Activated B cell treated with CpG ODN at 0.5 μM for 24 hours (primary cell): ENCODE measurements at regions of chr10 and their contacts with region 1.

Region 1: DNA sequence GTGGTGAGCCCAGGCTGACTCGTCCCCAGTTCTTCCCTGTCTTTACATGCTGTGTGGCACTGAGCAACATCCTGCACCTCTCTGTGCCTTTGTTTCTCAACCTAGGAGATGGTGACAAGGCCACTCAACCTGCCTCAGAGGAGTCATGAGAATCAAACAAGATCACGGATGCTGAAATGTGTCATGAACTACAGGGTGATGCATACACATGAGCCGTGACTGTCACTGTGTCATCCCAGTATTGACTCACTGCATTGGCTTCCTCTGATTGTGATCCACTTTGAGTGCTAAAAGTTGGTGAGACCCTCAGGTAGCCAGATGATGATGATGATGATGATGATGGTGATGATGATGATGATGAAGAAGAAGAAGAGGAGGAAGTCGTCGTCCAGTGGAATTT is 11.5 kb downstream of the C10orf71 start:
- DNase-seq: no peak
- ATAC-seq: peak; percentile 41
- H3K4me3 Mint-ChIP-seq: peak overlapping the region; percentile 74
- H3K27ac Mint-ChIP-seq: peak overlapping the region; percentile 50
- H3K4me1 Mint-ChIP-seq: peaks cover 25% of the 10 kb centered on the region
- H3K27me3 Mint-ChIP-seq: no peaks in the 10 kb centered on the region
- CTCF ChIP-seq: no peak

Region 2: GRCh38 chr10:48792687-48793096 is 517.8 kb before region 1 on chr10:
- CTCF ChIA-PET with region 1: no interaction called
- POLR2A ChIA-PET with region 1: no interaction called
- intact Hi-C with region 1: no loop called
- DNase-seq: no peak
- ATAC-seq: no peak
- H3K4me3 Mint-ChIP-seq: no peak overlapping the region
- H3K27ac Mint-ChIP-seq: no peak overlapping the region
- H3K4me1 Mint-ChIP-seq: peaks cover under 1% of the 10 kb centered on the region
- H3K27me3 Mint-ChIP-seq: no peaks in the 10 kb centered on the region
- CTCF ChIP-seq: no peak

Region 3: DNA sequence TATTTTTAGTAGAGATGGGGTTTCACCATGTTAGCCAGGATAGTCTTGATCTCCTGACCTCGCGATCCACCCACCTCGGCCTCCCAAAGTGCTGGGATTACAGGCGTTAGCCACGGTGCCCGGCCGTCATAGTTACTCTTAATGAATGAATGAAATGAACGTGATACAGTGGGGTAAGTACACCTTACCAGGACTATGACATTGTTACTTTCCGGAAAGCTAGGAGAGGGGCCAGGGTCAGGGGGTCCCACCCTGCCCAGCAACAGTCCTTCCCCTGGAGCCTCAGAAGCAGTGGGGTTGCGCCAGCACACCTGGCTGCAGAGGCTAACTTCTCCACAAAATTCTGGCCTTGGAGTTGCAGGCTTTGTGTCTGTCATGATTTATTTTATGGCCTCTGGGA is 216.5 kb before region 1 on chr10:
- CTCF ChIA-PET with region 1: no interaction called
- POLR2A ChIA-PET with region 1: interaction called, 12 read pairs
- intact Hi-C with region 1: no loop called
- DNase-seq: no peak
- ATAC-seq: no peak
- H3K4me3 Mint-ChIP-seq: no peak overlapping the region
- H3K27ac Mint-ChIP-seq: no peak overlapping the region
- H3K4me1 Mint-ChIP-seq: no peaks in the 10 kb centered on the region
- H3K27me3 Mint-ChIP-seq: peaks cover 12% of the 10 kb centered on the region
- CTCF ChIP-seq: no peak

Region 4: DNA sequence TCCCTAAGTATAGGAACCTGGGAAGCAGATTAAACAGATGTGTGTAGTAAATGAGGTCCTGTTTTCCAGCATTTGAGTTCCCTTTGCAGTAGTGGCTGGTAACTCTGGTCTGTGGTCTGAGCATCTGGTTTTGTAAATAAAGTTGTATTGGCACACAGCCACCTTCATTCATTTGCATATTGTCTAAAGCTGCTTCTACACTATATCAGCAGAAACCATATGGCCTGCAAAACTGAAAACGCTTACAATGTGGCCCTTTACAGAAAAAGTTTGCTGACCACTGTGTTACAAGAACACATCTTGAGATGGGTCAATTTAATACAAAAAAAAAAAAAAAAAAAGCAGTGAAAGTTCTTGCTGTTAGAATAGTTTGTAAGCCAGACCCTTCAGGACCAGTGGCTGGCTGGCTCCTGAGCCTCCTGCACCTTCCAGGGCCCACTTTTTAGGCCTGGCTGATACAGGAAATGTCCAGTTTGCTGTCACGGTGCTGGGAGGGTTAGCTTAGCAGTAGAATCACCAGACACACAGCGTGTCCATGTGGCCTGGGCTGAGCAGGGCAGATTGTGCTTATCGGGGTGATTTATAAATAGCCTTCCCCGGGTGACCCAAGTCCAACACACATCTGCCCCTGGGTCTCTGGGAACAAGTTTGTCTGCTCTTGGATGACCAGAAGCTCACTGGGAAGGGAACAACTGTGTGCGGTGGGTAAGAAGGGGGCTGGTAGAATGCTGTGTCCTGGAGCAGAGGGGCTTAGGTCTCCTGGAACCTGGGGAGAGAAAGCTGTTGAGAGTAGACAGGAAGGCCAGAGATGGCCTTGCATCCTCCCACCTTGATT is 10.1 kb before region 1 on chr10:
- CTCF ChIA-PET with region 1: no interaction called
- POLR2A ChIA-PET with region 1: no interaction called
- intact Hi-C with region 1: no loop called
- DNase-seq: no peak
- ATAC-seq: peak; percentile 10
- H3K4me3 Mint-ChIP-seq: no peak overlapping the region
- H3K27ac Mint-ChIP-seq: no peak overlapping the region
- H3K4me1 Mint-ChIP-seq: peaks cover 23% of the 10 kb centered on the region
- H3K27me3 Mint-ChIP-seq: no peaks in the 10 kb centered on the region
- CTCF ChIP-seq: no peak